Left lung (tissue), 14 donors: ENCODE measurements at regions of chr1 and their contacts with region 1.

Region 1: DNA sequence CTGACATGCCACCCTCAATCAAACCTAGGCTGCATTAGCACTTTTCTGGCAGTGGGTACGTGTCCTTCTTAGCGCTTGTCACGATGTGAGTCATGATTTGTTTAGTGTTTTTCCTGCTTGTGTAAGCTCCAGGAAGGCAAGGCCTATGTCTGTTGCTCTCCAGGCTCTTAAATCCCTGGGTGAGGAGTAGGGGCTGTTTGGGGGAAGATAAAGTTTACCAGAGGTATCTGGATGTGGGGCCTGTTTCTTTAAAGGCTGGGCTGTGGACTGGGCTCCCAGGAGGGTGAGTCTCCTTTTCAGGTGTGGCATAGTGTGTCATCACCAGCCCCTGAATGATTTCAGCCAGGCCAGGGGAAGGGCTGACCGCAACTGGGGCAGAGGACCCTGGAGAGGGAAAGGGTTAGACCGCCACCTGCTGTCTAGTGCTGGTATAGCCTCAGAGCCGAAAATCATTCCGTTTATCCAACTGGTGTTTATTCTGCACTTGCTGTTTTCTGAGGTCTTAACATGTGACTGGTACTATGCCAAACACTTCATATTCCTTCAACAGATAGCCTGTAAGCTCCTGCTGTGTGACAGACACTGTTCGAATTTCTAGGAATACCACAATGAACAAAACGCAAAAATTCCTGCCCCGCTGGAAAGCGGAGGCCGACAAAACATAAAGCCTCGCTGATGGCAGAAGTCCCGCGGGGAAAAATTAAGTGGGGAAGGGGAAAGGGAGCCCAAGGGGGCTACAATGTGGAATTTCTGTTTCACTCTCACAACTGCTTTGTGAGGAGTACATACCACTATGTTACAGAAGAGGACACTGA is 9.7 kb downstream of the SERINC2 start:
- DNase-seq: peak in 3 of 4 donors; percentile 50 to 73 (median 69)
- ATAC-seq: peak; percentile 97
- H3K4me3 ChIP-seq: no peak overlapping the region
- H3K27ac ChIP-seq: peak overlapping the region in 1 of 2 donors; percentile 18
- H3K4me1 ChIP-seq: peaks cover 9 to 13% of the 10 kb centered on the region in 2 donors
- H3K27me3 ChIP-seq: peaks cover 0 to 9% of the 10 kb centered on the region in 2 donors
- CTCF ChIP-seq: peak; percentile 87 to 96

Region 2: GRCh38 chr1:31182352-31182751 is 240.4 kb before region 1 on chr1:
- intact Hi-C with region 1: loop called in 1 of 2 experiments (anchors 10 kb)
- DNase-seq: peak; percentile 63 to 93 (median 84)
- ATAC-seq: peak; percentile 91
- H3K4me3 ChIP-seq: peak overlapping the region in 1 of 2 donors; percentile 2
- H3K27ac ChIP-seq: no peak overlapping the region
- H3K4me1 ChIP-seq: peaks cover 4 to 13% of the 10 kb centered on the region in 2 donors
- H3K27me3 ChIP-seq: peaks cover 0 to 59% of the 10 kb centered on the region in 2 donors
- CTCF ChIP-seq: no peak

Region 3: GRCh38 chr1:31371121-31371959 is 51.4 kb before region 1 on chr1:
- intact Hi-C with region 1: no loop called
- DNase-seq: no peak
- ATAC-seq: no peak
- H3K4me3 ChIP-seq: no peak overlapping the region
- H3K27ac ChIP-seq: no peak overlapping the region
- H3K4me1 ChIP-seq: peaks cover 16 to 24% of the 10 kb centered on the region in 2 donors
- H3K27me3 ChIP-seq: peaks cover 0 to 13% of the 10 kb centered on the region in 2 donors
- CTCF ChIP-seq: no peak

Region 4: GRCh38 chr1:31476891-31477828 is 54.4 kb after region 1 on chr1:
- intact Hi-C with region 1: no loop called
- DNase-seq: no peak
- ATAC-seq: no peak
- H3K4me3 ChIP-seq: no peak overlapping the region
- H3K27ac ChIP-seq: no peak overlapping the region
- H3K4me1 ChIP-seq: peaks cover 0 to 12% of the 10 kb centered on the region in 2 donors
- H3K27me3 ChIP-seq: no peaks in the 10 kb centered on the region
- CTCF ChIP-seq: no peak